ENCODE measurements at regions of chr18 and their contacts with region 1.

Region 1: DNA sequence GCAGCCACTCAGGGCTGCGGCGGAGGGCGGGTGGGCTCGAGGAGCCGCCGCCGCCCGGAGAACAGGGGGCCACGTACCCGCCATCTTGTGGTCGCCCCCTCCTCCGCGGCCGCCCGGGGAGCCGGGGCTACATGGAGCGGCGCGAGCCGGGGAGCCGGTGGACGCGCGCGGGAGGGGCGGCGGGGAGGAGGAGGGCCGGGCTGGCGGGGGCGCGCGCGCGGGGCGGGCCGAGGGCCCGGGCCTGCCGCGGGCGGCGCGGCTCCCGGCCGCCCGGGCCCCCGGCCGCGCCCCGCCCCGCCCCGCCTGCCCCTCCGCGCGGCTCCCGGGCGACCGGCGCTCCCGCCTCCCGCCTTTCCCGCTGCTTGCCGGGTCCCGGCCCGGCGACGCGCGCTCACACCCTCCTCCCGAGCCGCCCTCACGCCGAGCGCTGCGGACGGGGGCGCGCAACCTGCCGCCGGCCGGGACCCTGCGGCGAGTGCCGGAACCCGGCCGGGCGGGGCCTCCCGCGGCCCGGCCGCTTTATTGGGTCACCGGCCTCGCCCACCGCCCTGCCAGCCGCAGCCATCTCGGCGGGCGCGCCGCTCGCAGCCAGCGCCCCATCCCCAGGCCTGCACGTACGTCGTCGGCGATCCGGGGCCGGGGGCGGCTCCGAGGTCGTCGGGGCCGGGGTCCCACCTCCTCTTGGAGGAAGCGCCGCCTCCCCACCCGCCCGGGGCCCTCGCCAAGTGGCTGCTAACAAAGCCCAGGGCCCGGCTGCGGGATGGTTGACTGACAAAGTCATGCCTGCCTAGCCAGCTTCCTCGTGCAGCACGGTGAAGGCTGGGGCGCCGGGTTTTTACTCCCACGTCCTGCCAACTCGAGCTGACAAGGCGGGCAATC is at the start of gene PPP4R1:
- H3K4me3 Mint-ChIP-seq: peak within 1 kb of the TSS; percentile 98
- H3K27ac Mint-ChIP-seq: peak within 1 kb of the TSS; percentile 93
- H3K4me1 Mint-ChIP-seq: peaks cover 33% of the 10 kb centered on the region
- H3K27me3 Mint-ChIP-seq: no peaks in the 10 kb centered on the region

Region 2: DNA sequence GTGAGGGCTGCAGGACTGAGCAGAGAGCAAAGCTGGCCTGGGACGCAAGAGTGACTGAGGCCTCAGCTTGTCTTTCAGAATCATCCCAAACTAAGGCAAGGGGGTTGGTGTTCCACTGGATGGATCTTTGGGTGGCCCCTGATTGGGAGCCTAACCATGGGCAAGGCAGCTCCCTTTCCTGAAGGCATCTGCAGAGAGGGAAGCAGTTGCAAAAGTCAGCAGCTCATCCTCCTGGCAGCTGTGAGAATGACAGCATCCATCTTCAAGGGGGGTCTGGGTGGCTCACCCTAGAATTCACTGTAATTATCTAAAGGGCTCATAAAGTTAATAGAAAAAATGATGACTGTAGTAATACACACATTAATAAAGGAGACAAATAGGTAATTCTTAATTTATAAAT is 46.9 kb after region 1 on chr18:
- intact Hi-C with region 1: loop called (anchors 10 kb)
- H3K4me3 Mint-ChIP-seq: no peak overlapping the region
- H3K27ac Mint-ChIP-seq: no peak overlapping the region
- H3K4me1 Mint-ChIP-seq: no peaks in the 10 kb centered on the region
- H3K27me3 Mint-ChIP-seq: peaks cover 1% of the 10 kb centered on the region

Region 3: DNA sequence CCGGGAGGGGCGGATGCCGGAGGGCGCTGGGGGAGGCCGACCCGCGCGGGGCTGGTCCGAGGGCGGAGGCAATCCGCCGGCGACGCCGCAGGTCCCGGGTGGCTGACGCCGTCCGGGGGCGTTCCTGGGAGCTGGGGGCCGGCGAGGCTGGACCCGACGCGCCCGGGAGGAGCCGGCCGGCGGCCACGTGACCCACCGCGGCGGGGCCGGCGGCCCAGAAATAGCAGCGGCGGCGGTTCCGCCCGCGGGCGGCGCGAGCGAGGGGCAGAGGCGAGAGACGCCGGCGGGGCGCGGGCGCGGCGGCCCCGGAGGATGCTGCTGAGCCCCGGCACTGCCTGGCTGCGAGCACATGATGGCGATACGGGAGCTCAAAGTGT is 93.4 kb after region 1 on chr18 and contains the start of gene RAB31:
- intact Hi-C with region 1: loop called (anchors 10 kb)
- H3K4me3 Mint-ChIP-seq: peak within 1 kb of the TSS; percentile 96
- H3K27ac Mint-ChIP-seq: peak within 1 kb of the TSS; percentile 85
- H3K4me1 Mint-ChIP-seq: peaks cover 71% of the 10 kb centered on the region
- H3K27me3 Mint-ChIP-seq: no peaks in the 10 kb centered on the region

Region 4: GRCh38 chr18:9771261-9771976 is 156.8 kb after region 1 on chr18:
- intact Hi-C with region 1: loop called (anchors 5 kb)
- H3K4me3 Mint-ChIP-seq: peak overlapping the region; percentile 65
- H3K27ac Mint-ChIP-seq: peak overlapping the region; percentile 93
- H3K4me1 Mint-ChIP-seq: peaks cover 99% of the 10 kb centered on the region
- H3K27me3 Mint-ChIP-seq: no peaks in the 10 kb centered on the region

Region 5: GRCh38 chr18:9885170-9886004 is 270.7 kb after region 1 on chr18 and contains the start of gene TXNDC2:
- intact Hi-C with region 1: no loop called
- H3K4me3 Mint-ChIP-seq: no peak within 1 kb of the TSS
- H3K27ac Mint-ChIP-seq: no peak within 1 kb of the TSS
- H3K4me1 Mint-ChIP-seq: no peaks in the 10 kb centered on the region
- H3K27me3 Mint-ChIP-seq: no peaks in the 10 kb centered on the region

Region 6: GRCh38 chr18:9913526-9914333 is 299.1 kb after region 1 on chr18 and contains the start of gene VAPA:
- intact Hi-C with region 1: loop called (anchors 10 kb)
- H3K4me3 Mint-ChIP-seq: peak within 1 kb of the TSS; percentile 91
- H3K27ac Mint-ChIP-seq: peak within 1 kb of the TSS; percentile 95
- H3K4me1 Mint-ChIP-seq: peaks cover 43% of the 10 kb centered on the region
- H3K27me3 Mint-ChIP-seq: no peaks in the 10 kb centered on the region

Region 7: DNA sequence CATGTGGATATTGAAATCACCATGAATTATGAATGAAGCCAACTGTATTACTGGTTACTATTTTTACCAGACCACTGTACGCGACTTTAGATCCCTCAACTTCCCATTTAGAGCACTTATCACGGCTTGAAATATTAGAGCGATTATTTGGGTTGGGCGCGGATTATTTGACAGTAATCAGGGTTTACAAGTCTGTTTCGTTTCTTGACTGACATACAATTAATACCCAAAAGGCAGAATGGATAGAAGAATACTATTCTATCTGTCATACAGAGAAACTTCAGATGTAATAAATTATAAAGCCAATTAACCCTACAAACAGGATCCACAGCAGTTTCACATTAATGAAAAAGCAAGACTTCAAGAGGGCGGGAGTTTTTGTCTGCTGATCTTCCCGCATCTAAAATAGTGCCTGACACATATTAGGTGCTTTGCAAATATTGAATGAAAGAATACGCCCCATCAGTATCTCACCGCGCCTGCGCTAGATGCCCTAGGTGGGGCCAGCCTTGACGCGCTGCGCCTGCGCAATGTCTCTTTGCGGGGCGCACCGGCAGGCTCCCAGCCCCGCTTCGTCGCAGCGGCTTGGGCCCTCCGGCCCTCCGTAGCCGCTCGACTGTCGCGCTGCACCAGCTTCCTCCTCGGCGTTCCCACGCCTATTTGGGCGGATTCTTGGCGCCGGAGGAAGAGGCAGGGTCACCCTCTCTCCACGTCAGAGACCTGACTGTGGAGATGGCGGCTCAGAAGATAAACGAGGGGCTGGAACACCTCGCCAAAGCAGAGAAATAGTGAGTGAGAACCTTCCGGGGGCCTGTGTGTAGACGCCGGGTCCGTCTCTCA is 911.0 kb after region 1 on chr18 and contains the start of gene NAPG:
- intact Hi-C with region 1: loop called (anchors 10 kb)
- H3K4me3 Mint-ChIP-seq: peak within 1 kb of the TSS; percentile 95
- H3K27ac Mint-ChIP-seq: peak within 1 kb of the TSS; percentile 94
- H3K4me1 Mint-ChIP-seq: peaks cover 44% of the 10 kb centered on the region
- H3K27me3 Mint-ChIP-seq: peaks cover 2% of the 10 kb centered on the region